ENCODE measurements at regions of chr3 and their contacts with region 1.

Region 1: DNA sequence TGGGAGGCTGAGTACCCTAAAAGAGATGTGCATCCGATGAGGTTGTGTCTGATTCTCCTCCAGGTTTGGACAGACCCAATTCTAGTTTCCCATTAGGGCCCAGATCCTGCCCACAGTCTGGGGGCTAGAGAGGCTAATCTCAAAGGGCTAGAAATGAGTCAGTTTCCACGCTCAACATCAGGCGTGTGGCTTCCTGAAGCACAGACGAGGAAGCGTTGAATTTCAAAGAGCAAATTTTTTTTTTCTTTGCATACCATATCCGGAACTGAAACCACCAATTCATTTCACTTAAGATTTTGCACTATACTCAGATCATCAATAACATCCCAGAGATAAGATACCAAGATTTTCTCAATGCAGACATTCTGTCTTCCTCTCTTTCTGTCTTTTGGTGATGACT is 173.8 kb upstream of the BCL6 start:
- DNase-seq: peak; percentile 67
- H3K4me3 Mint-ChIP-seq: peak overlapping the region; percentile 62
- H3K27ac Mint-ChIP-seq: peak overlapping the region; percentile 93
- H3K4me1 Mint-ChIP-seq: peaks cover 86% of the 10 kb centered on the region
- H3K27me3 Mint-ChIP-seq: peaks cover 3% of the 10 kb centered on the region

Region 2: DNA sequence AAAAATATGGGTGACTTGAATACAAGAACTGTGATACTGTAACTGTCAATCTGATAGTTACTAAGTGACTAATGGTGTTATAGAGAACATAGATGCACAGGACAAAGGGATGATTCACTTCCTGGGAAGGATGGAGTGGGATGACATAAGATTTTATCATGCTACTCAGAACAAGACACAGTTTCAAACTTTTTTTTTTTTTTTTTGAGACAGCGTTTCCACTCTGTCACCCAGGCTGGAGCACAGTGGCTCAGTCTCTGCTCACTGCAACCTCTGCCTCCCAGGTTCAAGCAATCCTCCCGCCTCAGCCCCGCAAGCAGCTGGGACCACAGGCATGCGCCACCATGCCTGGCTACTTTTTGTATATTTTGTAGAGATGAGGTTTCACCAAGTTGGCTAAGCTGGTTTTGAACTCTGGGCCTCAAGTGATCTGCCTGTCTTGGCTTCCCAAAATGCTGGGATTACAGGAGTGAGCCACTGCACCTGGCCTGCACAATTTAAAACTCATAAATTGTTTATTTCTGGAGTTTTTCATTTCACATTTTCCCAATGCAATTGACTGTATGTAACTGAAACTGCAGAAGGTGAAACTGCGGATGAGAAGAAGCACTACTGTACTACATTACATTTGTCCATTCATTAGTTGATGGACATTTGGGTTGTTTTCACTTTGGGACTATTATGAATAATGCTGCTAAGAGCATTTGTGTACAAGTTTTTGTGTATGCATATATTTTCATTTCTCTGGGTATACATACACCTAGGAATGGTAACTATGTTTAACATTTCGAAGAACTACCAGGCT is 1036.0 kb before region 1 on chr3:
- intact Hi-C with region 1: loop called (anchors 10 kb)
- DNase-seq: peak; percentile 31
- H3K4me3 Mint-ChIP-seq: peak overlapping the region; percentile 54
- H3K27ac Mint-ChIP-seq: peak overlapping the region; percentile 90
- H3K4me1 Mint-ChIP-seq: peaks cover 58% of the 10 kb centered on the region
- H3K27me3 Mint-ChIP-seq: no peaks in the 10 kb centered on the region

Region 3: DNA sequence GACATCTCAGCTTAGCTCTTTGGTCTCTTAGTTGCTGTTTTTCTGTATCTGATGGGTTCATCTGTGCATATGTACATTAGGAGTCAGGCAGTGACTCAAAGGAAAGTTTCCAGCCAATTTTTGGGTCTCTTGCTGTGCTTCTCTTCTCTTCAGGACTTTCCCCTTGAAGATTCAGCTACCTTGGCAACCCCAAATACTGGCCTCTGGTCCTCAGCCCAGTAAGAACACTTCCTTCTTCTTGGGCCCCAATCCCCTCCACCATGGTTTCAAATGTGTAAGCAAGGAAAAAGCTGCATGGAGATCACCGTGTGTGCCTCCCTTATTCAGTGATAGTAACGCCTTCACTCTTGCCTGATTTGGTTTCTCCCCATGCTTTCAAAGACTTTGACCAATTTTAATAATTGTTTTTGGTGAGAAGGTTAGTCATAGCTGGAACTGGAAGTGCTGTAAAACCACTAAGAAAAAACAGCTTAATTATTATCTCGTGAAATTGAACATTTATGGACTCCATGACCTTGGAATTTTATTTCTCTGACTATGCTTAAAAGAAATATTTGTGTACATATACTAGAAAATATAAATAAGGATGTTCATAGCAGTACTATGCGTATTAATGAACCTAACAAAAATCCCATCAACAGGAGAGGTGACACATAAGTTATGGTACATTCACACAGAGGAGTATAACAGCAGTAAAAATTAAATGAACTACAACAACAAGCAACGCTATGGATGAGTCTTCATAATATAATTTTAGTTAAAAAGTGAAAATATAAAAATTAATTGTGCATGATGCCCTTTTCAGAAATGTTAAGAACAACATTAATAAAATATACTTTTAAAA is 48.5 kb before region 1 on chr3:
- intact Hi-C with region 1: loop called (anchors 1 kb)
- DNase-seq: no peak
- H3K4me3 Mint-ChIP-seq: peak overlapping the region; percentile 49
- H3K27ac Mint-ChIP-seq: peak overlapping the region; percentile 84
- H3K4me1 Mint-ChIP-seq: peaks cover 32% of the 10 kb centered on the region
- H3K27me3 Mint-ChIP-seq: no peaks in the 10 kb centered on the region

Region 4: GRCh38 chr3:188061133-188061532 is 142.1 kb after region 1 on chr3:
- intact Hi-C with region 1: loop called (anchors 1 kb)
- DNase-seq: peak; percentile 38
- H3K4me3 Mint-ChIP-seq: peak overlapping the region; percentile 61
- H3K27ac Mint-ChIP-seq: peak overlapping the region; percentile 87
- H3K4me1 Mint-ChIP-seq: peaks cover 53% of the 10 kb centered on the region
- H3K27me3 Mint-ChIP-seq: no peaks in the 10 kb centered on the region

Region 5: GRCh38 chr3:188309437-188310269 is 390.6 kb after region 1 on chr3:
- intact Hi-C with region 1: loop called (anchors 1 kb)
- DNase-seq: no peak
- H3K4me3 Mint-ChIP-seq: peak overlapping the region; percentile 40
- H3K27ac Mint-ChIP-seq: peak overlapping the region; percentile 64
- H3K4me1 Mint-ChIP-seq: peaks cover 35% of the 10 kb centered on the region
- H3K27me3 Mint-ChIP-seq: peaks cover 9% of the 10 kb centered on the region

Region 6: DNA sequence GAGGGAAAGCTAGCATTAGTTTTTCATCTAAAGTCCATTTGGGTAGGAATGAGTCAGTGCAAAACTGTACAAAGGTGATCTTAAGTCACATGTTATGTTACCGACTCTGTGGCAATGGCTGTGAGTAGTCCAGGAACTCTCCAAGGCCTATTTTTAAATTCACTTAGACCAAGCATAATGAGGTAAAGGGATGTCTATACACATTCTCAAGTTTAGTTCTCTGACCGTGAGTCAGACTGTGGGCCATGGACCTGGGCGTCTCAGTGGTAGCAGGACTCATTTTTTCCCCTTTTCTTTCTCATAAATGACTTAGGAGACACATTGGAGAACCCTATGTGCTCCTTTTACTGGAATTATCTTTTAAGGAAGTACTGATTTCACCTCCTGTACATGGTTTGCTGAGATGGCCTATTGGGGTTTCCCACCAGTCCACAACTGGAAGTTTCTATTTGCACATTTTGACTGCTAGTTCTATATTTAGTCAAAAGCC is 764.0 kb after region 1 on chr3:
- intact Hi-C with region 1: loop called (anchors 2 kb)
- DNase-seq: no peak
- H3K4me3 Mint-ChIP-seq: no peak overlapping the region
- H3K27ac Mint-ChIP-seq: peak overlapping the region; percentile 74
- H3K4me1 Mint-ChIP-seq: peaks cover 28% of the 10 kb centered on the region
- H3K27me3 Mint-ChIP-seq: no peaks in the 10 kb centered on the region

Region 7: DNA sequence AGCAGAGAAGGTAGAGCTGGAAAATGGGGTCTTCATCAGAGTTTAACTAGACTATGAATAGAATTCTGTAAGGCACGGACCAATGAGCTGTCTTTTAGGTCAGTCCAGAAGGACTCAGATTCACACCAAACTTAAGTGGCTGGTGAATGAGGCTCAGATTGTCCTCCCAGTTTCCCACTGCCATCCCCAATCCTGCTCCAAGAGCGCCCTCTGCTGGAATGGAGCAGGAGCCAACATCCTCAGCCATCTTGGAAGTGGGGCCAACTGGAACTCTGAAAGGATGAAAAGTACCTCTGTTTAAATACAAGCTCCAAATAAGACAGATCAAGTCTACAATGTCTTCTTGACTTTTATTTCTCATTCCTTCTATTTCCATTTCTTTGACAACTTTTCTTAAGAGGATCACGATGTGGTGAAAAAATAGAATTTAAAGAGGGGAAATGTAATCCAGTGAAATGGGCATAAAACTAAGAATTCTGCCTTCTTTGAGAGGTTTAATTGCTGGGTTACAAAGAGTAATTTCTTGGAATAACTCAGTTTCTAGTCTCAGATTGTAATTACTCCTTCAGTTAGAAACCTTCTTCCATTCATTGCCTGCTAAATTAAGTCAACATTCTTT is 1035.7 kb after region 1 on chr3:
- intact Hi-C with region 1: loop called (anchors 2 kb)
- DNase-seq: peak; percentile 68
- H3K4me3 Mint-ChIP-seq: no peak overlapping the region
- H3K27ac Mint-ChIP-seq: no peak overlapping the region
- H3K4me1 Mint-ChIP-seq: peaks cover 46% of the 10 kb centered on the region
- H3K27me3 Mint-ChIP-seq: no peaks in the 10 kb centered on the region